ENCODE measurements at regions of chr19 and their contacts with region 1.

Region 1: DNA sequence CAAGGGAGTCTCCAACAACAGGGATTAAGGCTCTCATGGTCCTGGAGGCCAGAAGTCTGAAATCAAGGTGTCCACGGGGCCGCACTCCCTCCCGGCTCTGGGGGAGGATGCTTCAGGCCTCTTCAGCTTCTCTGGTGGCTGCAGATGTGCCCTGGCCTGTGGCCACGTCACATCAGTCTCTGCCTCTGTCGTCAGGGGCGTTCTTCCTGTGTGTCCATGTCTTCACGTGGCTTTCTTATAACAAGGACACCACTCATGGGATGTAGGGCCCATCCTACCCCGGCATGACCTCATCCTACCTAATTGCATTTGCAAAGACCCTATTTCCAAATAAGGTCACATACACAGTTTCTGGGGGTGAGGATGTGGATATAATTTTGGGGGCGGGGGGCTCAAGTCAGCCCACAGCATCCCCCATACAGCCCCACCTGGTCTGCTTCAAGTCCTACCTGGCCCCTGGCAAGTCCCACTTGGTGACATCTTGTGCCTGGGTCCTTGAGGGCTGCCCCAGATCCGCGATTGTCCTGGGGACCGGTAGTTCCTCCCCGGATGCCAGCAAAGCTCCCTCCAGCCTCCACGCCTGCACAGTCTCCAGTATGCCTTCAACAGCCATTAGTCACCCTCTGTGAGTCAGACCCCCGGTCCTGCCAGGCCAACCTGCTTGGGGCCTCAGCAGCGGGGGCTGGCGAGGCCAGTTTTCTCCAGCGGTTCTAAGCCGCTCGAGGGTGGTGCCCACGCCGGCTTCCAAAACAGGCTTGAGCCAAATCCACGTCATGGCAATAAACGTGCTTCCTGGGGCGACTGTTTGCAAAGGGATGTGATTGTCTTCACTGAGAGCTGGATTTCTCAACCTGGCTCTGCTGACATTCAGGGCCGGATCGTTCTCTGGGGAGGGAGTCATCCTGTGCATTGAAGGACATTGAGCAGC is 32.2 kb downstream of the MYO9B start:
- DNase-seq: peak; percentile 86
- H3K4me3 ChIP-seq: no peak overlapping the region
- H3K27ac ChIP-seq: peak overlapping the region; percentile 49
- H3K4me1 ChIP-seq: peaks cover 18% of the 10 kb centered on the region
- H3K27me3 ChIP-seq: no peaks in the 10 kb centered on the region
- CTCF ChIP-seq: no peak

Region 2: DNA sequence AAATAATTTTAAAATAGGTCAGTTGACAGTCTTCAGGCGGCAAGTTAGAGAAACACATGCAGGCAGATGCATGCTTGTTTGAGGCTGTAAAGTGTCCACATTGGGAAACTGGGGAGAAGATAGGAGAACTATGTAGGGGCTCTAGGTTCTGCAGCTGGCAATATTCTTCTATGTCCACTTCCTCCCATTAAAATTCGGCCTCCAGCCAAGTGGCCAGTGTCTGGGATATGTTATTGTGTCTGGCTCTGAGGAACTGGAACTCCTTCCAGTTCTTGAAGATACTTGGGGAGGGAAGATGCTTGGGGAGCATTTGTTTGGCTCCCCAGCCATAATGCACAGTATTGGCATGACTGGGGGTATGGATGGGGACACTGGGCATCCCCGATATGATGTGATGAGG is 804.0 kb before region 1 on chr19:
- CTCF ChIA-PET with region 1: no interaction called
- POLR2A ChIA-PET with region 1: no interaction called
- intact Hi-C with region 1: no loop called
- DNase-seq: no peak
- H3K4me3 ChIP-seq: no peak overlapping the region
- H3K27ac ChIP-seq: no peak overlapping the region
- H3K4me1 ChIP-seq: no peaks in the 10 kb centered on the region
- H3K27me3 ChIP-seq: no peaks in the 10 kb centered on the region
- CTCF ChIP-seq: no peak

Region 3: DNA sequence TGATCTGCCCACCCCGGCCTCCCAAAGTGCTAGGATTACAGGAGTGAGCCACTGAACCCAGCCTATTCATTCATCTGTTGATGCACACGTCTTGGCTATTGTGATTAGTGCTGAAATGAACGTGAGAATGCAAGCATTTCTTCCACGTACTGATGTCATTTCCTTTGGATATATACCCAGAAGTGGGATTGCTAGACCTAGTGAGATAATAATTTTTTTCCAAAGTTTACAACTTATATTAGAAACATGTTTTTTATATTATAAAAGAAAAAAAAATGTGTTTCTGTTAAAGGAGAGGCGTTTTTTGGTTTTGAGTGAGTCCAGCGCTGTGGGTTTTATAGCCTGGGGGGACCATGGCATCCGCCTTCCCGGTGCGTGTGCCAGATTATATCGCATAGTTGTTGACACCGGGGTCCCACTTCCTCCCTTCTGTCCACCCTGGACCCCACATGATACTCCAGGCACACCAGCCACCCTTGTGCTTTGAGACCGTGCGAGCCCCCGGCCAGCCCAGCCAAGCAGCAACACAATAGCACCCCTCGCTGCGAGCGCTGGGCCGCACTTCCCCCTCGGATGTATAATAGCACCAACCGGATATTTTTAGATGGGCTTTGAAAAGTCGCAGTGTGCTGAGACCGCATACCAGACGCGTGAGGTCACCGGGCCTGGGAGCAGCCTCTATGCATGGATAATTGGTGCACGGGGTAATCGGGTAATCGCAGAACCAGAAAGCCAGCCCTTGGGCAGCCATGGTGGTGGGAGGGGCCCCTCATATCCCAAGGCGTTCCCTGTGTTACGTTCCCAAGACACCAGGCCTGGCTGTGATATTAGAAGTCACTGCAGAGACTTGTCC is 27.4 kb after region 1 on chr19:
- CTCF ChIA-PET with region 1: no interaction called
- POLR2A ChIA-PET with region 1: no interaction called
- intact Hi-C with region 1: loop called (anchors 1 kb)
- DNase-seq: peak; percentile 99
- H3K4me3 ChIP-seq: peak overlapping the region; percentile 29
- H3K27ac ChIP-seq: peak overlapping the region; percentile 92
- H3K4me1 ChIP-seq: peaks cover 23% of the 10 kb centered on the region
- H3K27me3 ChIP-seq: no peaks in the 10 kb centered on the region
- CTCF ChIP-seq: no peak

Region 4: GRCh38 chr19:17156927-17157302 is 49.1 kb after region 1 on chr19:
- CTCF ChIA-PET with region 1: no interaction called
- POLR2A ChIA-PET with region 1: no interaction called
- intact Hi-C with region 1: no loop called
- DNase-seq: no peak
- H3K4me3 ChIP-seq: no peak overlapping the region
- H3K27ac ChIP-seq: no peak overlapping the region
- H3K4me1 ChIP-seq: no peaks in the 10 kb centered on the region
- H3K27me3 ChIP-seq: no peaks in the 10 kb centered on the region
- CTCF ChIP-seq: no peak

Region 5: DNA sequence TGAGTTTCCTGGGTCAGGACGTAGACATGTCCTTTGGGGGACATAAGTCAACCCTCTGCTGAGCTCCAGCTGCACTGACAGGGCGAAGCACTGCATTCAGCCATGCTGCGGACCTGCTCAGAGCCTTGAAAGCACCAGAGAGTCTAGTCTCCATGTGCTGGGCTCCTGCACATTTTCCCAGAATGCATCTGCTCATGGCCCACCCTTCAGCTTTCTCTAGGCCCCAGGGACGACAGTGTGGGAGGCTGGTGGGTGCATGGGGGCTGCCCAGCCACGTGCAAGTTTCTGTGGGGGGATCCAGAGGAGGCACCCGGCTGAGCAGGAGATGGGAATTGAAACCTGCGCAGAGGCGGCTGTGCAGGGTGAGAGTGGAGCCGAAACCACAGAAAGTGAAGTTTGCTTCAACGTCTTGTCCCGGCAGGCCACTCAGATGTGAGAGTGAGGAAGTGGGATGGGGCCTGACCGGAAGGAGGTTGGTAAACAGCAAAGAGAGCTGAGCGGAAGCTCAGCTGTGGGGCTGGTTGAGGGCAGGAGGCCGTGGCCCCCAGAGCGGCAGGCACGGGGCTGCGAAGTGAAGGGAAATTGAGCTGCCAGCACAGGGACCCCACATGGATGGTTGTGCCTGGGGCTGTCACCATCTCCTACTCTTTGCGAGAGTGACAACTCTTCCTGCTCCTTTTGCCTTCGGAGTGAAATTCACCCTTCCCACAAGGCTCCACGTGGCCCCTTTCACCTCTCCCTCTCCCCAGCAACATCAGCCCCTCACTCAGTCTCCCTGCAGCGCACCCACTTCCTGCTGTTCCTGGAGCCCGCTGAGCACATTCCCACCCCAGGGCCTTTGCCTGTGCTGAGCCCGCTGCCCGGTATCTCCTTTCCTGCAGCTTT is 415.4 kb after region 1 on chr19:
- CTCF ChIA-PET with region 1: no interaction called
- POLR2A ChIA-PET with region 1: no interaction called
- intact Hi-C with region 1: no loop called
- DNase-seq: no peak
- H3K4me3 ChIP-seq: no peak overlapping the region
- H3K27ac ChIP-seq: no peak overlapping the region
- H3K4me1 ChIP-seq: no peaks in the 10 kb centered on the region
- H3K27me3 ChIP-seq: no peaks in the 10 kb centered on the region
- CTCF ChIP-seq: no peak

Measured in A673 (cell line).